ENCODE measurements at regions of chr18 and their contacts with region 1.

Region 1: DNA sequence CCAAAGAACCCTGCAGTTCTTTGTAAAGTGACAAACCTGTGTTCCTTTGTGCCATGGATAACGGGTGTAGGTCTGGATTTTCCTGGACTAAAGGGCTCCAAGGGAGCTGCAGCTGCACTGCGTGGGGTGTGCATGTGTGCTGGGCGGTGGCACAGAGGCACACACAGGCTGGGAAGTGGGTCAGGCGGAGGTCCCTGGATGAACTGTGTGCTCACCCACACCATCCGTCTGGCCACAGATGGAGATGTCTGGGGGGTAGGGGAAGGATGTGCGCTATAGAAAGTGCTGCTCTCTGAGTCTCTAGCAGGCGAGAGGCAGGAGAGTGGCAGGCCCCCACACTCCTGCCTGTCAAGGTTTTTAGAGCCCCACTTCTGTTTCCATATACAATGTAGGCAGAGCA is 137.2 kb downstream of the LOXHD1 start:
- DNase-seq: no peak
- H3K4me3 ChIP-seq: no peak overlapping the region
- H3K27ac ChIP-seq: no peak overlapping the region
- H3K4me1 ChIP-seq: no peaks in the 10 kb centered on the region
- H3K27me3 ChIP-seq: no peaks in the 10 kb centered on the region
- CTCF ChIP-seq: no peak
- POLR2A ChIP-seq: no peak

Region 2: DNA sequence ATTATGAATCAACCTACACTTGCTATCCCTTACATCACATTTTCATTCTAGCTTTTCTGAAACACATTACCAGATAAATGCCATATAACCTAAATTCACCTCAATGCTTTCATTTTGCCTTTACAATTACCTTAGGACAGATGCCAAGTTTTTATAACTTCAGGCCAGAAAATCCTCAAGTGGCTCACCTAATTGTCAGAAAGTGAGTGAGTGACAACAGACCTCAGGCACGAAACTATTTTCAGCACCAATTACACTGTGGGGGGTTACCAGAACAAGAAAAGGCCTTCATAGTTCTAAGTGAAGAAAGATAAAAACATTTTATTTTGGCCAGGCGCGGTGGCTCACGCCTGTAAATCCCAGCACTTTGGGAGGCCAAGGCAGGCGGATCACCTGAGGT is 289.3 kb after region 1 on chr18:
- intact Hi-C with region 1: loop called (anchors 10 kb)
- DNase-seq: no peak
- H3K4me3 ChIP-seq: no peak overlapping the region
- H3K27ac ChIP-seq: no peak overlapping the region
- H3K4me1 ChIP-seq: no peaks in the 10 kb centered on the region
- H3K27me3 ChIP-seq: no peaks in the 10 kb centered on the region
- CTCF ChIP-seq: no peak
- POLR2A ChIP-seq: no peak

Region 3: GRCh38 chr18:46832849-46833248 is 313.0 kb after region 1 on chr18:
- intact Hi-C with region 1: no loop called
- DNase-seq: no peak
- H3K4me3 ChIP-seq: no peak overlapping the region
- H3K27ac ChIP-seq: no peak overlapping the region
- H3K4me1 ChIP-seq: no peaks in the 10 kb centered on the region
- H3K27me3 ChIP-seq: no peaks in the 10 kb centered on the region
- CTCF ChIP-seq: no peak
- POLR2A ChIP-seq: no peak